ENCODE measurements at regions of chr1 and their contacts with region 1.

Region 1: DNA sequence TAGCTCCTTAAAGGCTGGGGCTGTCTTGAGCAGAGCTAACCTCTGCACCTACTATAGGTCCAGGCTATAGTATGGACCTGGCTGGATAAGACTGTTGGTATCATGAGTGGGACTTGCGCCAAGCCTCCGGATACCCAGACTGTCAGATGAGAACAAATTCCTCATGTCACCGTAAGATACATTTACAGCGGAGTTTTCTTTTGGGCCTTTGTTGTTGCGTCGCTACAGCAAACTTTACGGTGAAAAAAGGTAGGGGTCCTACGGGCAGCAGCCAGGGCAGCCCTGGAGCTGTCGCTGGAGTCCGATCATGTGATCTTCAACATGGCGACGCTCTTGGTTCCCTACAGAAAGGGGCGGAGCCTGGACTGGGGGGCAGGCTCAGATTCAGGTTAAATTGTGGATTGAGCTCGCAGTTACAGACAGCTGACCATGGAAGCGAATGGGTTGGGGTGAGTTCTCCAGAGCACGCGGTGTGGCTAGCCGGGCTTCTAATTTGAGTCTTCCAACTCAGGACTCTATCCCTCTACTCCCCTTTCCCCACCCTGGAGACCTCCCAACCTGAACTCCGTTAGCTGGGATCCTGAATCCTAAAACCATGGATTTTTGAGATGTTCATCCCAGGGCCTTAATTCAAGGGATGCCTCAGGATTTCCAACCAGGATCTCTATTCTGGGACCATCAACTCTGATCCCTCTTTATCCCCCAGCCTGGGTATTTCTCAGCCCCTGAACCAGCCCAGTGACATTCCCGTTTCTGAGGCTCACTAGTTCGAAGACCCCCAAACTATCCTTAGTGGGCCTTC is at the start of gene UROD:
- DNase-seq: peak; percentile 89 to 93 (median 90)
- H3K4me3 ChIP-seq: peak within 1 kb of the TSS; percentile 82
- H3K27ac ChIP-seq: peak within 1 kb of the TSS; percentile 48 to 71
- H3K4me1 ChIP-seq: peaks cover 14% of the 10 kb centered on the region
- H3K27me3 ChIP-seq: no peaks in the 10 kb centered on the region
- CTCF ChIP-seq: no peak
- EP300 ChIP-seq: no peak
- POLR2A ChIP-seq: peak; percentile 25
- total RNA-seq, gene UROD: 69.2 to 92.3 (median 74.7) TPM

Region 2: DNA sequence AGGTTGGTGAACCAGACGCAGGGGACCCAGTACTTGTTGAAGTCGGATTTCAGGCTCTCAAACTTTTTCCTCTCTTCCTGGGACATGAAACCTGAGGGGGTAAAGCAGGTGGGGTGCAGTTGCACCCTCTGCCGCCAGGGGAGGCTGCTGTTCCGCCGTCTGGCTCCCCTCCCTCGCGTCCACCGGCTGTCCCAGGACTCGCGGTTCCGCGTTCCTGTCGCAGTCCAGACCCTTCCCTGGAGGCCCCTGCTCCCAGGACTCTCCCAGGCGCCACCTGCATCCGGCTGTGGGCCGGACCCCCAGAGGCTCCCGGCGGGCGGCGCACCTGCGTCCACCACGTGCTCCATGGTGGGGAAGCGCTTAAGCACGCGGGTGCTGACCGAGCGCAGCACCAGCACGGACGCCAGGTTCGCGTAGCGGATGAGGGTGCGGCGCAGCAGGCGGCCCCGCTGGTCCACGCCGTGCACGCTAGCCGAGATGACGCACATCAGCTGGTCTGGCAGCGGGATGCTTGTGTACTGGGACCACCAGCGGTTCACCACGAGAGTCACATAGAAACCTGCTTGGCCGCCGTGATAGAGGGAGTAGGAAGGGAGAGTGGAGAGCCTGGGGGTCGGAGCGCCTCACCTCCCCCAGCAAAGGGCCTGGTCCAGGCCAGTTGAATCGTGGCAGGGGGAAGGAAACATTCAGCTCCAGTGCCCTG is 225.7 kb before region 1 on chr1:
- intact Hi-C with region 1: loop called in 1 of 4 experiments (anchors 5 kb)
- DNase-seq: peak; percentile 79 to 85 (median 84)
- H3K4me3 ChIP-seq: peak overlapping the region; percentile 38
- H3K27ac ChIP-seq: peak overlapping the region; percentile 66 to 80
- H3K4me1 ChIP-seq: peaks cover 5% of the 10 kb centered on the region
- H3K27me3 ChIP-seq: no peaks in the 10 kb centered on the region
- CTCF ChIP-seq: peak; percentile 97 to 99 (median 99)
- EP300 ChIP-seq: no peak
- POLR2A ChIP-seq: no peak

Region 3: GRCh38 chr1:44835738-44836675 is 176.0 kb before region 1 on chr1:
- intact Hi-C with region 1: loop called (anchors 5 to 10 kb)
- DNase-seq: peak; percentile 88 to 94 (median 92)
- H3K4me3 ChIP-seq: no peak overlapping the region
- H3K27ac ChIP-seq: peak overlapping the region in 1 of 2 donors; percentile 27
- H3K4me1 ChIP-seq: peaks cover 3% of the 10 kb centered on the region
- H3K27me3 ChIP-seq: no peaks in the 10 kb centered on the region
- CTCF ChIP-seq: peak; percentile 64 to 87 (median 67)
- EP300 ChIP-seq: no peak
- POLR2A ChIP-seq: no peak

Region 4: GRCh38 chr1:44994309-44994898 is 17.6 kb before region 1 on chr1:
- intact Hi-C with region 1: no loop called
- DNase-seq: no peak
- H3K4me3 ChIP-seq: no peak overlapping the region
- H3K27ac ChIP-seq: no peak overlapping the region
- H3K4me1 ChIP-seq: no peaks in the 10 kb centered on the region
- H3K27me3 ChIP-seq: no peaks in the 10 kb centered on the region
- CTCF ChIP-seq: no peak
- EP300 ChIP-seq: no peak
- POLR2A ChIP-seq: no peak

Region 5: GRCh38 chr1:45303582-45304310 is 291.7 kb after region 1 on chr1:
- intact Hi-C with region 1: loop called (anchors 1 to 5 kb)
- DNase-seq: peak; percentile 99
- H3K4me3 ChIP-seq: peak overlapping the region; percentile 93
- H3K27ac ChIP-seq: peak overlapping the region; percentile 81 to 88
- H3K4me1 ChIP-seq: no peaks in the 10 kb centered on the region
- H3K27me3 ChIP-seq: no peaks in the 10 kb centered on the region
- CTCF ChIP-seq: peak; percentile 68 to 94 (median 91)
- EP300 ChIP-seq: no peak
- POLR2A ChIP-seq: peak; percentile 79

Region 6: DNA sequence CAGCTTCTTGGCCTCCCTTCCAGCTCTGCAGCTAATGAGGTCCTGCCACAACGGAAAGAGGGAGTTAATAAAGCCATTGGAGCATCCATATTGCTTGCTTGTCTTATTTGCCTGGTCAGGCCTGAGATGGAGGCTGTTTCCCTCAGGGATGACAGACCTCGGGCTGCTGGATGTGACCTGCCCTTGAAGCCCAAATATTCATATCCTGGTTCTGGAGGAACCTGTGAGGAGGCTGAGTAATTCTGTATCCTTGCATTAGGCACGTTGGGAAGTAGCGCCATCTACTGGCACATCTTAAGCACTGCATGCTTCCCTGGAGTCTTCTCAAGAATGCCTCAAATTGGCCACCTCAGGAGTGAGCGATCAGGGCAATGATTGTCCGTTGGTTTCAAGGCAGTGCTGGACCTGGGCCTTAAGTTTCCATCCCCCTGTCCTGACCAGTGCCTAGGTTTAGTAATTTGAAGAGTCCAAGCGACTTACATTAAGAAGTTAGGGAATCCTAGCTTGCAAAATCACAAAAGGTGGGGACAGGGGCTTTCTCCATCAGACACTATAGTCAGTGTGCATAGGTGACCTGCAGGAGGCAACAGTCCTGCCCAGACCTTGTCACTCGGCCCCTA is 558.0 kb after region 1 on chr1:
- intact Hi-C with region 1: loop called in 1 of 4 experiments (anchors 10 kb)
- DNase-seq: peak; percentile 60 to 80 (median 70)
- H3K4me3 ChIP-seq: no peak overlapping the region
- H3K27ac ChIP-seq: no peak overlapping the region
- H3K4me1 ChIP-seq: no peaks in the 10 kb centered on the region
- H3K27me3 ChIP-seq: no peaks in the 10 kb centered on the region
- CTCF ChIP-seq: peak; percentile 84 to 89 (median 86)
- EP300 ChIP-seq: no peak
- POLR2A ChIP-seq: no peak

Measured in ovary (tissue), 10 donors.